Mucosa of descending colon (tissue), 3 donors: ENCODE measurements at regions of chr1 and their contacts with region 1.

Region 1: DNA sequence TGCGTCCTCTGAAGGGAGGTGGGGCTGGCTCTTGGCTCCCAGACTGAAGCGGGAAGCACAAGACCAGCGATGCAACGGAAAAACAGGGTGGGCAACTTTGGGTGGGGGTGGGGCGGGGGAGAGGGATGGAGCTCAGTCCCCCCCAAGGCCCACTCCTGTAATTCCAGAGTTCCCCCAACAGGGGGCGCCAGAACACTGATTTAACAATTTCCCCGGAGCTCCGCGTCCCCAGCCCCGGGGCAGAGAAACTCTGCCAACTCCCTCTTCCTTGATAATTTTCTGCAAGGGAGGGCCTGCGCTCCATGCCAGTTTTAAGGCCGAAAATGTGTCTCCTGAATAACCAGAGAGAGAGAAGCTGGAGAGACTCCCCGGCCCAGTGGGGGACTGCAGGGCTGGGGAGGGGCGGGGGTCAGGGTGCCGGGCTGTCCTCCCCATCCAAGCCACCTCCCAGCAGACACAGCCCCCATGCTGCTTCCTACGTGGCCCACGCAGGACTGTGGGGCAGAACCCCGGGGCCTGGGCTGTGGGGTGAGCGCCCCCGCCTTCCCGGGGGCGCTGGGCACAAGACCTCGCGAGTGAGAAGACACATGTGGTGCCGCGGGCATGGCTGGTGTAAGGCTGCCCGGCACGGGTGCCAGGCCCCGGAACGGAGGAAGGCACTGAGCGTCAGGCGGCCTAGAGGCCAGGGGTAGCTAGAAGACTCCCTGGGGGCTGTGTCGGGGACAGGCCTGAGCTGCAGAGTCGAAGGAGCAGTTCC is 51.4 kb downstream of the KIF21B start:
- DNase-seq: peak in 2 of 3 donors; percentile 72 to 79
- ATAC-seq: peak; percentile 61
- H3K4me3 ChIP-seq: no peak overlapping the region
- H3K4me1 ChIP-seq: no peaks in the 10 kb centered on the region
- CTCF ChIP-seq: peak; percentile 84

Region 2: GRCh38 chr1:200493344-200493743 is 478.8 kb before region 1 on chr1:
- intact Hi-C with region 1: no loop called
- DNase-seq: no peak
- ATAC-seq: no peak
- H3K4me3 ChIP-seq: no peak overlapping the region
- H3K4me1 ChIP-seq: no peaks in the 10 kb centered on the region
- CTCF ChIP-seq: no peak

Region 3: DNA sequence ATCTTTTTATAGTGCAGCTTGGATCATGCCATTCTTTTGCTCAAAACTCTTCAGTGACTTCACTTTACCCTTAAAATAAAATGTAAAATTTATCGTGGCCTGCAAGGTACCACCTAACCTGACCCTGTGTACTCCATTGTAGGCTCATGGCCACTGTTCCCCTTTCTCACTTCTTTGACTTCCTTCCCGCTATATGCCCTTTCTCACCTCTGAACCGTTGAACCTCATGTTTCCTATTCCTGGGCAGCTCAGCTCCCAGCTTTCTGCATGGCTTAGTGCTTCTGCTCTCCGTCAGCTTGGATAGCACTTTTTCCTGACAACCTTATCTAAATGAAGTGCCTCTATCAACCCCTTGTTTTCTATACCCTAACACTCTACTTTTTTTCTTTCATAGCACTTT is 160.4 kb before region 1 on chr1:
- intact Hi-C with region 1: no loop called
- DNase-seq: no peak
- ATAC-seq: no peak
- H3K4me3 ChIP-seq: no peak overlapping the region
- H3K4me1 ChIP-seq: no peaks in the 10 kb centered on the region
- CTCF ChIP-seq: no peak

Region 4: DNA sequence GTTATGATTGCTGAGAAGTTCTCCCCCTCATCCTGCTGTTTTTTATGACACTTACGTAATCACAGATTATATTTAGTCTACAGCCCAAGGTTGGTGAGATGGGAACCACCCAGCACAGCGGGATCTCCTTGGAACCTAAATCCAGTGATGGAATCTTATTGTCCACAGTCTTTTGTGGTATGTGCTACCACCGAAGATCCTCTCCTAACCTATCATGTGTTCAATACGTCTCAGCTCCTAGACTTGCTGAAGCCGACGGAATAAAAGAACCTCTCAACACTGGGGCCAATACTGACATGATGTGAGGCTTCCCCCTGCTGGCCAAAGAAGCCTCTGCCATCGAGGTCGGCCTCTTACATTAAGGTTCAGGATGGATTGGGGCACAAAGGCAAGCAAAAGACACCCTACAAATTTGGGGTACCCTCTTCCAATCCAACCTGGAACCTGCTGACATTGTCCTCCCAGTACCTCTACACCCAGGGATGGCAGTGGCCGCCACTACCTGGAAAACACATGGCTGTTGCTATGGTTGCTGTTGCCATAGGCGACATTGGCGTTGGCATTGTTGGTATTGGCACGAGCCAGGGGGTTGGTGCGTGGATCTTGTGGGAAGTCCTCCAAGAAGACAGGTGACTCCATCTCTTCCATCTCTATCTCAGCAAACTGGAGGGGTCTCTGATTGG is 70.8 kb after region 1 on chr1:
- intact Hi-C with region 1: loop called (anchors 5 kb)
- DNase-seq: peak in 2 of 3 donors; percentile 76 to 87
- ATAC-seq: peak; percentile 87
- H3K4me3 ChIP-seq: no peak overlapping the region
- H3K4me1 ChIP-seq: peaks cover 7% of the 10 kb centered on the region
- CTCF ChIP-seq: peak; percentile 82

Region 5: GRCh38 chr1:201114236-201115131 is 142.4 kb after region 1 on chr1:
- intact Hi-C with region 1: loop called in 1 of 2 experiments (anchors 5 kb)
- DNase-seq: peak; percentile 73 to 94 (median 90)
- ATAC-seq: peak; percentile 97
- H3K4me3 ChIP-seq: peak overlapping the region; percentile 9
- H3K4me1 ChIP-seq: peaks cover 8% of the 10 kb centered on the region
- CTCF ChIP-seq: peak; percentile 66

Region 6: GRCh38 chr1:202348509-202349205 is 1376.5 kb after region 1 on chr1 and contains the start of gene PPP1R12B:
- intact Hi-C with region 1: no loop called
- DNase-seq: peak; percentile 96 to 98 (median 97)
- ATAC-seq: peak; percentile 99
- H3K4me3 ChIP-seq: peak within 1 kb of the TSS; percentile 97
- H3K4me1 ChIP-seq: peaks cover 7% of the 10 kb centered on the region
- CTCF ChIP-seq: no peak
- total RNA-seq, gene PPP1R12B: 80.9 to 655 (median 89.0) TPM